OCI-LY7 (cell line): ENCODE measurements at regions of chr2 and their contacts with region 1.

Region 1: GRCh38 chr2:64052468-64053241 is 33.4 kb upstream of the VPS54 start:
- DNase-seq: peak; percentile 83
- H3K4me3 ChIP-seq: peak overlapping the region; percentile 11
- H3K27ac ChIP-seq: peak overlapping the region; percentile 96
- H3K4me1 ChIP-seq: peaks cover 84% of the 10 kb centered on the region
- CTCF ChIP-seq: no peak

Region 2: DNA sequence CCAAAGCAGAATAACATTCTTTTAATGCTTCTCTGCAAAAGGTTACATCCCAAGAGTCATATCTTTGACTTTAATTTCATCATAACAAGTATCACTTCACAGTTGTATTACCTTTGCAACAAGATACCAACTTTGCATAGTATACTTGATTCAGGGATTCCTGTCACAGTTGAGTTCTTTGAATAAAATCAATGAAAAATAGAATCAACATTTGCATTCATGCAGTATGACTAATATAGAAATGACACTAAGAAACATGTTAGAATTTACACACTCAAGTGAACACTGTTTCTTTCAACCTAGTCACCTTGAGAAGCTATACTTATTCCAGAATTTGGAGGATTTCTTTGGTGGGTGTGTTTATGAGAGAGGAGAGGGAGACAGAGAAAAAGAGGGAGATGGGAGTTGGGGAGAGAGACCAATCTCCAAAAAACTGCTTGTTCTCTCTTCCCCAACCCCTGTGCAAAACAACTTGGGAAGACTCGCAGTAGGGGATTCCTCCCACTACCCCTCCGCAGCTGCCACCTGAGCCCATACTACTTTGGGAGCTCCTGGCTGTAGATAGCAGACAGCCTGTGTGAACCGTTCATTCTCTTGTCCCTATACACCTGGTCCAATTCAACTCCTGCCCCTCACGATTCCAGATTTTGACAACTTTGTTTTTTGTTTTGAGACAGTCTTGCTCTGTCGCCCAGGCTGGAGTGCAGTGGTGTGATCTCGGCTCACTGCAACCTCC is 33.9 kb after region 1 on chr2:
- CTCF ChIA-PET with region 1: interaction called, 4 read pairs
- POLR2A ChIA-PET with region 1: interaction called, 10 read pairs
- intact Hi-C with region 1: loop called (anchors 1 kb)
- DNase-seq: peak; percentile 75
- H3K4me3 ChIP-seq: peak overlapping the region; percentile 55
- H3K27ac ChIP-seq: peak overlapping the region; percentile 99
- H3K4me1 ChIP-seq: peaks cover 95% of the 10 kb centered on the region
- CTCF ChIP-seq: no peak

Region 3: DNA sequence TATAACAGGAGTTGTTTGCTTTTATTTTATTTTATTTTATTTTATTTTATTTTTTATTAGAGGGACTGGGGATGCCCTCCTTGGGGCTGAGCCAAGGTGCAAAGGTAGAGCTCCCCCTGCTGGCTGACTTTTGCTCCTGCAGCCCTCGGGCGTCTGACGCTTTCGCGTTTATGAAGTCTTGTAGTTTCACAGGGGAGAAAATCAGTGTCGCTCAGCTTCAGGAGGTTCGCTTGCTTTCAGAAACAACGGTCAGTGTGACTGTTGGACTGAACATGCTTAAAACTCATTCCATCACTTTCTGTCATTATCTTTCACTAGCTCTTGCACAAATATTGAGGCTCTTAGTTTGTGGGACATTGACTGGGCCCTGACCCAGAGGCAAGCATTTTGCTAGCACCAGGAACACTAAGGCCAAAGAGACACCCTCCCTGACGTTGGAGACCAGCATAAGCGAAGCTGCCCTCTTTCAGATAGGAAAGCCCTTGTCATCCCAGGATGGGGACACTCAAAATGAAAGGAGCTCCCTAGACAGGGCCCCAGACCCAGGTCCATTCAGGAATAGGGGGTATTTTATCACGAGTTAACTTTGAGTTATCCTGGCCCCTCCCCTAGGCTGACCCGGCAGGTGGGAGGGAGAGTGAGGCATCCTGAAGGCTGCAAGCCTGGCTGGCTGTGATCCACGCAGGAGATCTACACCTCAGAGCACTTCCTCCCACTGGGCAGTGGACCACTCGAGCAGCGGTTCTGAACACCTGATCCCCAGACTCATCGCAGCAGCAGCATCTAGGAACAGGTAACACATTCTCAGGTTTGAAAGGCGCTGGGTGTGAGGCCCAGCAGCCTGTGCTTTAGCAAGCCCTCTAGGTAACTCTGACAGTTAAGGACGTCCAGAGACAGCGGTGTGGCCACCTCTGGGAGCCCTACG is 435.7 kb after region 1 on chr2:
- CTCF ChIA-PET with region 1: no interaction called
- POLR2A ChIA-PET with region 1: no interaction called
- intact Hi-C with region 1: loop called (anchors 1 kb)
- DNase-seq: peak; percentile 80
- H3K4me3 ChIP-seq: no peak overlapping the region
- H3K27ac ChIP-seq: no peak overlapping the region
- H3K4me1 ChIP-seq: no peaks in the 10 kb centered on the region
- CTCF ChIP-seq: peak; percentile 98